ENCODE measurements at regions of chr6 and their contacts with region 1.

Region 1: DNA sequence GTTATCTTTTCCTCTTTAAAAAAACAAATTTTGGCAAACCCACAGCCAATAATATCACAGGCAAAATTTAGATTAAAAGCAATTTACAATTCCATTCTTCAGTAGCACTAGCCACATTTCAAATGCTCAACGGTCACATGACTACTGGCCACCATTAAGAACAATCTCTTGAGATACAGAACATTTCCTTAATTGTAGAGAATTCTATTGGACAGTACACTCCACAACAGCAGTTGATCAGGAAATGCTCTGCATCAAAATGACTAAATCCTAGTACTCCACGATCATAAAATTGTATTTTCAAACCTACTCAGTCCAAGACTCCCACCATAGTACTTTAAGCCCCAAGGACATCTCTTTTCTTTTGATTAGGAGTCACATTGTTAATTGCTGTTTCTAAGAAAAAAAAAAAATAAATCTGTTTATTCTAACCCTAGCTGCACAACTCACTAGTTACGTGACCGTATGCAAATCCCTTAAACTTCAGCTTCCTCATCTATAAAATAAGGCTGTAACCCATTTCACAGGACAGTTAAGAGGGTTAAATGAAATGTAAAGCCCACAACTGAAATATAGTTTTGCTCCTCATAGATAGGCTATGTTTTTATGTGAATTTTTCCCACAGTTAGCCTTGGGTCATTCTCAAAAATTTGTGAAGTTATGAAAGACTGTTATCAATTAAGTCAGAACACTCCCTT is 9.8 kb downstream of the C6orf62 start:
- DNase-seq: no peak

Region 2: GRCh38 chr6:25042536-25043282 is 333.5 kb after region 1 on chr6:
- CTCF ChIA-PET with region 1: interaction called, 10 read pairs
- POLR2A ChIA-PET with region 1: no interaction called
- DNase-seq: no peak